A549 (cell line): ENCODE measurements at regions of chr20 and their contacts with region 1.

Region 1: GRCh38 chr20:21571841-21572690 is 58.2 kb upstream of the NKX2-2 start:
- DNase-seq: no peak
- ATAC-seq: peak in 1 of 2 experiments; percentile 45; a peak in 2 of 6 replicates
- H3K4me3 ChIP-seq: no peak overlapping the region
- H3K27ac ChIP-seq: no peak overlapping the region
- H3K4me1 ChIP-seq: no peaks in the 10 kb centered on the region
- CTCF ChIP-seq: peak; percentile 88
- EP300 ChIP-seq: no peak
- POLR2A ChIP-seq: no peak
- RAD21 ChIP-seq: peak; percentile 77 to 81

Region 2: GRCh38 chr20:21520702-21521595 is 51.1 kb before region 1 on chr20:
- CTCF ChIA-PET with region 1: interaction called, 13 read pairs
- POLR2A ChIA-PET with region 1: no interaction called
- DNase-seq: no peak
- ATAC-seq: peak in 1 of 2 experiments; percentile 24; a peak in 2 of 6 replicates
- H3K4me3 ChIP-seq: no peak overlapping the region
- H3K27ac ChIP-seq: no peak overlapping the region
- H3K4me1 ChIP-seq: peaks cover 5% of the 10 kb centered on the region; the same call in 1 of the 3 replicates
- CTCF ChIP-seq: no peak
- EP300 ChIP-seq: no peak
- POLR2A ChIP-seq: no peak
- RAD21 ChIP-seq: peak in 1 of 2 experiments; percentile 17; a peak in 1 of 5 replicates

Region 3: DNA sequence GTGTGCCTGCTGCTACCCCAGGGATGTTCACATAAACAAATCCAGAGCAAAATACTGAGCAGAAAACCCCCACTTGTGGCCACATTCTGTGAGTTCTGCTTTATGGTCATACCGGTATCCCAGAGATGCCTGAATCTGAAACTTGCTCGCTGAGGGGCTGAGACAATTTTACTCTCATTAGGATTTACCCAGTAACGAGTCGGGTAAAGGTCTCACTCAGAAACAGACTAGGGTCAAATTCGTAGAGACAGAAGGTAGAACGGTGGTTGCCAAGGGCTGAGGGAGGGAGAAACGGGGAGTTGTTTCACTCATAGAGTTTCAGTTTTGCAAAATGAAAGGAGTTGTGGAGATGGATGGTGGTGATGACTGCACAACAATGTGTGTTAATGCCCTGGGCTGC is 12.8 kb before region 1 on chr20:
- CTCF ChIA-PET with region 1: interaction called, 39 read pairs
- POLR2A ChIA-PET with region 1: no interaction called
- DNase-seq: no peak
- ATAC-seq: no peak
- H3K4me3 ChIP-seq: no peak overlapping the region
- H3K27ac ChIP-seq: no peak overlapping the region
- H3K4me1 ChIP-seq: no peaks in the 10 kb centered on the region
- CTCF ChIP-seq: no peak
- EP300 ChIP-seq: no peak
- POLR2A ChIP-seq: no peak
- RAD21 ChIP-seq: no peak

Region 4: GRCh38 chr20:21583486-21584168 is 11.6 kb after region 1 on chr20:
- CTCF ChIA-PET with region 1: interaction called, 59 read pairs
- POLR2A ChIA-PET with region 1: no interaction called
- DNase-seq: no peak
- ATAC-seq: no peak
- H3K4me3 ChIP-seq: no peak overlapping the region
- H3K27ac ChIP-seq: no peak overlapping the region
- H3K4me1 ChIP-seq: no peaks in the 10 kb centered on the region
- CTCF ChIP-seq: no peak
- EP300 ChIP-seq: no peak
- POLR2A ChIP-seq: no peak
- RAD21 ChIP-seq: no peak